Activated CD4-positive, alpha-beta T cell treated with anti-CD3 and anti-CD28 coated beads, Interleukin-2, amount 10 ng/mL, durations not matched to agents 24 days and 14 days (primary cell): ENCODE measurements at regions of chr1 and their contacts with region 1.

Region 1: DNA sequence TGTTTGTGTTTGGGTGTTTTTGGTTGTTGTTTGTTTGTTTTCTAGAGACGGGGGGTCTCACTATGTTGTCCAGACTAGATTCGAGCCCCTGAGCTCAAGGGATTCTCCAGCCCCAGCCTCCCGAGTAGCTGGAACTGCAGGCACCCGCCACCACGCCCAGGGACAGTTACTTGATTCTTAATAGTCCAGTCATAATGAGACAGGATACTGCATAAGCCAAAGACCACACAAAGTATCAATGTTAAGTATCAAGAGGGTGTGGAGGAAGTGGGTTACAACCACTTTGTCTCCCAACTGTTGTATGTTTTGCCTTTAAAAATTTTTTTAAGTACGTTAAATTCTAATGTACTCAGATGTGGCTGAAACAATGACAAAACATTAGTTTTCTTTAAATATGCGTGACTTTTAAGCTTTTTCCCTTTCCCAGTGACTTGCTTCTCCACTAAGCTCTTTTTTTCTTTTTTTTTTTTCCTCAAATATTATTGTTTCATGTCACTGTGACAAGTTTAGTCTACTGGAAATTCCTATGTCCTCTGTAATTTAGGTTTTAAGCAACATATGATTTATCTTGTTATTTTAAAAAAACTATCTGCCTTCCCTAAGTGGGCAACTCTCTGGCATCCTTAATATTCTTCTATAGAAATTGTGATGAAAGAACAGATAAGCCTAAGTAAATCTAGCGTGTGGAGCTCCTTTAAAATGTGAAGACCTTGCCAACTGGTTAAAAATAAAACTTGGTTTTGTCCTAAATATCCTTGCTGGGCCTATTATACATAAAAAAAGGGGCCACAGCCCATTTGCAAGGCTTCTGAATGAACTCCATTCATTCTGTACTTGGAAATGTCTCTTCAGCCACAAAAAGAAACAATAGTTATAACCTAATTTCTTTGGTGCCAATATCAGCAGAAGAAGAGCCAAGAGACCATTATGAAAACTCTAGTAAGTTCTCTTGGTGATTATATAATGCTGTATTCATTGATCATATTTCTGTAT is 56.2 kb upstream of the DPH5 start:
- DNase-seq: peak; percentile 88
- H3K4me3 Mint-ChIP-seq: peak overlapping the region; percentile 44
- H3K27ac Mint-ChIP-seq: peak overlapping the region; percentile 76
- H3K4me1 Mint-ChIP-seq: peaks cover 38% of the 10 kb centered on the region
- H3K27me3 Mint-ChIP-seq: no peaks in the 10 kb centered on the region

Region 2: DNA sequence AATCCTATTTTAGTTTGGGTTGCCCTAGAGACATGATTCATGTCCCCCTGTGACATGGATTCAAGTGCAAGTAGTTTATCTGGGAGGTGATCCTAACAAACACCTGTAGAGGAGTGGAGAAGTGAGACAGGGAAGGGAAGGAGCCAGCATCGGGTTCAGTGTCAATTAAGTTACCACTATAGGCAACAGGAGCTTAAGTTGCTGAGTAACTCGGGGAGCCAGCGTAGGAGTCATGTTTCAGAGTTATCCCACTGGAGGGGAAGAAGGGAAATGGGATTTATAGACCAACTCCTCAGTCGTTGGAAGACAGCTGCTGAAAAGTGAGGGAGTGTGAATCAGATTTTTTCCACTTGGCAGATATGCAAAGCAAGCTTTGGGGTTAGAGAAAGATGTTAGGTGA is 131.0 kb before region 1 on chr1:
- intact Hi-C with region 1: loop called (anchors 2 kb)
- DNase-seq: no peak
- H3K4me3 Mint-ChIP-seq: no peak overlapping the region
- H3K27ac Mint-ChIP-seq: peak overlapping the region; percentile 21
- H3K4me1 Mint-ChIP-seq: peaks cover 52% of the 10 kb centered on the region
- H3K27me3 Mint-ChIP-seq: no peaks in the 10 kb centered on the region

Region 3: DNA sequence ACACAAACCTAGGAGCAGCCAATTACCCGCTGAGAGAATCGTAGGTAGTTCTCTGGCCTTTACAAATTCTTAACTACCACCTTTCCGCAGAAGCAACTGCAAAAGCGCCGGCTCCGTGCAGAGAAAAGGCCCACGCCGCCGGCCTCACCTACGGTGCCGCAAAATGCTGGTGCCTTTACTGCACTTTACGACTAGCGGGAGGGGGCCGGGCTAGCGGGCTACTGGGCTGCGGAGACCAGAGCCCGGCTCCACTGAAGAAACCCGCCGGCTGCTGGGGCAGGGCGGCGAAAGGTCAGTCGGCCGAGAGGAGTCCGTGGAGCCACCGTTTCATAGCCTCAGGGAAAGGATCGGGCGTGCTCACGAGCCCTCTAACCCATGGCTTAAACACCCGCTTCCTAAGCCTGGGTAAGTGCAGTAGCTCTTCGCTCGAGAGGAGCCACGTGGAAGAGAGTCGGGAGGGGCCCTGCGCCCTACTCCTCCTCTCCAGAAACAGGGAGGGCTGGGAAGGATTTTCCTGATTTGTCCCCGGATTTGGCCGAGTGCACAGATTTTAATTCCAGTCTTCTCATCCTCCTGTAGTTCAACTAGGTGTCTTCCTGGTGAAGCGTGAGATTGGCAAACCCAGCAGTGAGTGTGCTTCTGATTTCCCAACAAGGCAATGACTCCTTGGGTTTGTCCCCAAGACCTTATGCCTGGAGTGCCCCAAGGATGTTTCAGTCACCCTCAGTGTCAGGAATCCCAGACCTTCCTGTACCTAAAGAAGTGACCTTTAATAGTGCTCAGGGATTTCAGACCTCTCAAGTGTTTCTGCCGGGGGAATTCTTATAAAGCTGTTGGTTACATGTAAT is 55.9 kb before region 1 on chr1 and contains the start of gene DPH5:
- intact Hi-C with region 1: loop called (anchors 5 kb)
- DNase-seq: peak; percentile 97
- H3K4me3 Mint-ChIP-seq: peak within 1 kb of the TSS; percentile 100
- H3K27ac Mint-ChIP-seq: peak within 1 kb of the TSS; percentile 98
- H3K4me1 Mint-ChIP-seq: peaks cover 42% of the 10 kb centered on the region
- H3K27me3 Mint-ChIP-seq: no peaks in the 10 kb centered on the region
- total RNA-seq, gene DPH5: 37.5 and 41.0 TPM in 2 replicates

Region 4: GRCh38 chr1:101112051-101112780 is 30.4 kb after region 1 on chr1:
- intact Hi-C with region 1: loop called (anchors 2 kb)
- DNase-seq: peak; percentile 90
- H3K4me3 Mint-ChIP-seq: peak overlapping the region; percentile 58
- H3K27ac Mint-ChIP-seq: peak overlapping the region; percentile 91
- H3K4me1 Mint-ChIP-seq: peaks cover 53% of the 10 kb centered on the region
- H3K27me3 Mint-ChIP-seq: no peaks in the 10 kb centered on the region

Region 5: DNA sequence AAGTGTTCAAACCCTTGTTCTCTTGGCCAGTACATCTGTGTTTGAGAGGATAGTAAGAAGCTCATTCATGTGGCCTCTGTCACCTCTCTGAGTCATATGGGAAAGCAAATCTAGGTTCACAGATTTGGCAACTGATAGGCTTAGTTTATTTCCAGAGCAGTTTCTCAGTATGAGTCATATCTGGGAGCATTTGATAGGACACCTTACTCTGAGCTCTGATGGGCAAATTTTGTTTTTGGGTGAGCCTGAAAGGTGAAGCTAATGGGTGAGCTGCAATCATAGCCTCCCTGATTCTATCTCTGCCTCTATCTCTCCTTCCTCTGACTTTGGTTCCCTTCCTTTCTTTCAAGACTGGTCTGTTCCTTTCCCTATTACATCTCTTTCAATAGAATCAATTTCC is 289.5 kb after region 1 on chr1:
- intact Hi-C with region 1: loop called (anchors 10 kb)
- DNase-seq: peak; percentile 79
- H3K4me3 Mint-ChIP-seq: peak overlapping the region; percentile 41
- H3K27ac Mint-ChIP-seq: no peak overlapping the region
- H3K4me1 Mint-ChIP-seq: peaks cover 13% of the 10 kb centered on the region
- H3K27me3 Mint-ChIP-seq: peaks cover 21% of the 10 kb centered on the region